Posterior vena cava (tissue), 2 donors: ENCODE measurements at regions of chr1 and their contacts with region 1.

Region 1: DNA sequence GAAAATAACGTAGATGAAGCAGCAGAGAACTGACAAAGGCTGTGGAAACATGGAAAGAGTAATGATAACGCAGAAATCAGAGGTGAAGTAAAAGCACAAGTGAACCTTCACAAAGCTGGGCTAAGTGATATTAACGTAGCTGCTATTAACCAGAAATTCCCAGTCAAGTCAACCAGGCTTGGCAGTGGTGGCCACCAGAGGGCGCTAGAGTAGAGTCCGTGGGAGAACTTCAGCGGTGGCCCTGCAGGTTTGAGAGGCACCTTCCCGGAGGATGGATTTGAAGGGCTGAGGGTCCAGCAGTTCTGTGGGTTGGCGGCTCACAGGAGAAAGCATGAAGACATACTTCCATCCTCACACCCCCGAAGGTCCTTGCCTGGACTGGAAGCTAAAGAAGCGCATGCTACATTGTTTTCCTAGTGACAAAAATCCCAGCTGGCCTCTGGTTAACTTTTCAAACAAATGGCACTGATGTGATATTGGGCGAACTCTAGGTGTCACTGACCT is 81.7 kb upstream of the ZNF648 start:
- DNase-seq: peak; percentile 97

Region 2: GRCh38 chr1:182113879-182114626 is 29.2 kb before region 1 on chr1:
- intact Hi-C with region 1: no loop called
- DNase-seq: no peak

Region 3: DNA sequence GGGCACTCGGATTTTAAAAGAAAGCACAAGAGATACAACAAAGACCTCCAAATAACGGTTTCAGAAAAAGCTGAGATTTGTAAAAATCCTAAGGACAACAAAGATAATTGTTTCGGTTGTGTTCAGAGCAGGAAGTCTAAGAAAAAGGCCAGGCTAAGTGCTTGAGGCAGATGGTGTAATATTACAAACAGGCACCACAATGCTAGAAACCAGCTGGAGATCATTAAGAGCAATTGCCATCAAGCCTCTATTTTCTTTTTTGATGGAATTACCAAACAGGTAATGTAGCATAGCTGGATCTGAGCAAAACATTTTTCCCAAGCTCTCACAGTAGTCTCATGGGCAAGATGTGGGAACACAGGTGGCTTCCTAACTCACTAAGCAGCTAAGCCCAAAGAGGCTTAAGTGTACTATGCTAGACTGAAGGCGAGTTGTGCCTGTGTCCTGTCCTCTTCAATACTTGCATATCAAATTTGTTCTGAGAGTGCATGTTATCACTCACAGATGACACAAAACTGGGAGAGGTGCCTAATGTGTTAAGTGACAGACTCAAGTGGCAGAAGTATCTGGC is 86.8 kb after region 1 on chr1:
- intact Hi-C with region 1: no loop called
- DNase-seq: no peak

Region 4: DNA sequence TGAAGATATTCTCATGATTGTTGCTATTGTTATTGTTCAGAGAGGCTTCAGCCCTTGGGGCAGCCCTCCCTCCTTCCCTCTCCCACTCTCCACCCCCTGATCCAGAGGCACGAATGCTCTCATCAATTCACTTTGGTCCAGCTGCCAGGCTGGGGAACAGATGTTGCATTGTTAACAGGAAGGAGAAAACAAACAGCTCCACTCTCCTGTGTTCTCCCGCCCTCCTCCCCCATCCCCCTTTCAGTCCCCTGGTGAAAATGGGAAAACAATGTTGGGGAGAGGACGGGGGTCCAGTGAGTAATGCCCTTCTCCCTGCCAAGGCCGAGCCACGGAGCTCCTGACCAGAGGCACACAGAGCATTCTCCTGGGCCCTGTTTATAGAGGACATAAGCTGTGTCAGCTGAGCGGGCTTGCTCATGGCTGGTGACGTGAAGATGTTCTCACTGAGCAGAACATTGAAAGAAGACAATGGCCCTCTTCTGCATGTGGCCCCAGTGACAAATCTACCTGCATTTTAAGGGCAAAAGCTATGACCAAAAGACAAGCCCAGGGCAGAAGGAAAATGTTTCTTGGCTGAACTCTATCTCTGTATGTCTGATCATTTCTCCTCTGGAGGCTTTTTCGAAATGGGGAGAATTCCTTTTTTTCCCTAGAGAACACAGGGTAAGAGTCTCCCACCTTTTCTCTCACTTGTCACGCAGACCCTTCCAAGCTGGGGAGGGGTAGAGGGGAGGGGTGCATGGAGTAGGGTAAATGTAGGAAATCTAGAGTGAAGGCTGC is 136.7 kb after region 1 on chr1:
- intact Hi-C with region 1: loop called in 1 of 2 experiments (anchors 10 kb)
- DNase-seq: no peak

Region 5: GRCh38 chr1:182301467-182302198 is 158.4 kb after region 1 on chr1:
- intact Hi-C with region 1: loop called in 1 of 2 experiments (anchors 10 kb)
- DNase-seq: no peak

Region 6: GRCh38 chr1:182397771-182398393 is 254.7 kb after region 1 on chr1:
- intact Hi-C with region 1: loop called (anchors 2 kb)
- DNase-seq: no peak

Region 7: DNA sequence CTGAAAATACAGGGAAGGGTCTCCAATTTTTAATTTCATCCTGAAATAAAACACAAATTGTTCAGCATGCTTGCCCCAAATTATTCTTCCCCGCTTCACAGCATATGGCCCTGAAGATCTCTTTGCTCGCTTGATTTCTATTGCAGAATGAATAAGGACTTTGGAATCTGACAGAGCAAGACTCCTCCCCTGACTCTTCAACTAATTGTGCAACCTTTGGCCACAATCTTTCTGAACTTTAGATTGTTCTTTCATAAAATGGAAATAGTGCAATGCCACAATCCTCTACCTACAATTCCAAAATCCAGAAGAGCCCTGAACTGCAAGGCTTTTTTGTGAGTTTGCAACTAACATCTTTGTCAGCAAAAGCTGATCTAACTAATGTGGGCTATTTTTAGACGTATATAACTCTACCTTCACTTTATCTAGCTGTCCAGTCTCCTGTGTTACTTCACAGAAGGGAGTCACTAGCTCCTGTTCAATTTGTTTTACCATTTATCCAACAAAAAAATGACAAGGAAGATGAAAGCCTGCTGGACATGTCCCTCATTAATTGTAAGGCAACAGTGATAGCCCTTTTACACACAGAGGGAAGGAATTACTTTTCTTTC is 432.4 kb after region 1 on chr1:
- intact Hi-C with region 1: no loop called
- DNase-seq: no peak